OCI-LY7 (cell line): ENCODE measurements at regions of chr2 and their contacts with region 1.

Region 1: GRCh38 chr2:136008205-136008865 is 22.9 kb upstream of the DARS1 start:
- DNase-seq: no peak
- H3K4me3 ChIP-seq: no peak overlapping the region
- H3K27ac ChIP-seq: no peak overlapping the region
- H3K4me1 ChIP-seq: peaks cover 32% of the 10 kb centered on the region
- CTCF ChIP-seq: no peak

Region 2: GRCh38 chr2:136022396-136023146 is 14.2 kb after region 1 on chr2:
- CTCF ChIA-PET with region 1: interaction called, 3 read pairs
- POLR2A ChIA-PET with region 1: interaction called, 16 read pairs
- intact Hi-C with region 1: no loop called
- DNase-seq: no peak
- H3K4me3 ChIP-seq: no peak overlapping the region
- H3K27ac ChIP-seq: no peak overlapping the region
- H3K4me1 ChIP-seq: peaks cover 36% of the 10 kb centered on the region
- CTCF ChIP-seq: no peak